Right ventricle myocardium superior (tissue), 1 donor: ENCODE measurements at regions of chr4 and their contacts with region 1.

Region 1: DNA sequence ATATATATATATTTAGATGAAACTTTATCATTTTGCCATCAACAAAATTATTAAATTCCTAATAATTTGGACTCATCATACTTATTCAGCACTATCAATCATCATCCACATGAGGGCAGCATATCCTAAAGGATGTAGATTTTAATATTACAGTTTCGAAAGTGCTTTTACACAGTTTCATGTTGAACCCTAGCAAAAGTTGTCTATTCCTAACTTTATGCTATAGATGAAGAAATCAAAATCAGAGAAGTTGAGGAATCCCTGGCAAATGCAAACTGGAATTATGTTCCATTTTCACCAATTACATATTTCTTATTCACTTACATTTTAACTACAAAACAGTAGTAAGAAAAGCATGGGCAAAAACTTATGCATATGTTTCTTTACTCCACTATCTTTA is 36.6 kb upstream of the UGT2A1 start:
- DNase-seq: no peak
- ATAC-seq: no peak

Region 2: DNA sequence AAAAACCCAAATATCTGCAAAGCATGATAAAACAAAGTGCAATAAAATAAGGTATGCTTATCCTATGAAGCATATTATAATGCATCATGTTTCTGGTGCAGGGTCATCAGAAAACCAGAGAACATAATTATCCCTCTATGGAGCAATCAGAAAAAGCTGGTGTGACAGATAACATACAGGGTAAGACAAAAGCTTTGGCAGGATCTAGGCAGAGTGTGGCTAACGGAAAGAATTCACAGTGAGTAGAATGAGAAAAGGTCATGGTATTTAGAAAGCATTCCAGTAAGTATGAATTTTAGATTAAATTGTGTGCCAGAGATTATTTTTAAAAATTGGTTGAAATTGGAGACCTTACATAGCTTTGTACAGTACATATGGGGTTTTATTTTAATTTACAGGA is 164.9 kb before region 1 on chr4:
- intact Hi-C with region 1: no loop called
- DNase-seq: no peak
- ATAC-seq: no peak

Region 3: DNA sequence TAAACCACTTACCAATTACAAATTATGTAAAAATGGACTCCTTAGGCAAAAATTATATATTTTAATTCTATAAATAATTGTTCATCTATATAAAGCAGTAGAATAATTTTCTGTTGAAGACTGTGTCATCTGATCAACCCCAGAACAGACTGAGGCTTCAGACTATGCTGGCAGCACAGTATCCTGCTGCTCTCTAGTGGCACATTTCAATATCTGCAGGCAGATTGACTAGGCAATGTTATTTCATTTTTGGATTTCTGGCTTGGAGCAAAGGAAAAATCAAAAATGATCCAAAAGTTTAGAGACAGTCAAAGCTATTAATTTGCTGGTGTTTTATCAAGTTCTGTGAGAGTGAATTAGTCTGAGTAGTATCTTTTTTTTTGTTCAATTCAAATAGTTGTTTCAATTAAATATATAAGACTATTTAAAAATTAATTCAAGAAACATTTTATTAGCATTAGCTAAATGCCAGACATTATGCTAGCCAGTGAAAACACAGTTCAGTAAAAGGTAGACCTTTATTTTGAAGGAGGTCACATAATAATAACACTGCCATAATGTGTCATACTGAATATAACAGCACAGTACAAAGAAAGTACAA is 191.7 kb after region 1 on chr4:
- intact Hi-C with region 1: loop called (anchors 10 kb)
- DNase-seq: no peak
- ATAC-seq: no peak